GM13976 (cell line): ENCODE measurements at regions of chr10 and their contacts with region 1.

Region 1: GRCh38 chr10:132023092-132023811 is 41.5 kb upstream of the BNIP3 start:
- DNase-seq: peak; percentile 89
- CTCF ChIP-seq: peak; percentile 93

Region 2: GRCh38 chr10:131885391-131886161 is 137.7 kb before region 1 on chr10:
- in situ Hi-C with region 1: loop called (anchors 5 kb)
- DNase-seq: peak; percentile 90
- CTCF ChIP-seq: peak; percentile 99

Region 3: GRCh38 chr10:132497023-132497680 is 473.9 kb after region 1 on chr10:
- in situ Hi-C with region 1: no loop called
- DNase-seq: no peak
- CTCF ChIP-seq: no peak